HEK293 (cell line): ENCODE measurements at regions of chr6 and their contacts with region 1.

Region 1: GRCh38 chr6:11496152-11497060 is 41.1 kb upstream of the TMEM170B start:
- H3K4me3 ChIP-seq: no peak overlapping the region
- H3K27ac ChIP-seq: no peak overlapping the region
- H3K4me1 ChIP-seq: no peaks in the 10 kb centered on the region
- CTCF ChIP-seq: peak; percentile 83

Region 2: GRCh38 chr6:11093589-11094410 is 402.6 kb before region 1 on chr6 and contains the start of gene SMIM13:
- CTCF ChIA-PET with region 1: interaction called, 15 read pairs
- POLR2A ChIA-PET with region 1: no interaction called
- H3K4me3 ChIP-seq: peak within 1 kb of the TSS; percentile 98
- H3K27ac ChIP-seq: peak within 1 kb of the TSS; percentile 92
- H3K4me1 ChIP-seq: peaks cover 4% of the 10 kb centered on the region; the same call in 1 of the 2 replicates
- CTCF ChIP-seq: peak; percentile 97

Region 3: DNA sequence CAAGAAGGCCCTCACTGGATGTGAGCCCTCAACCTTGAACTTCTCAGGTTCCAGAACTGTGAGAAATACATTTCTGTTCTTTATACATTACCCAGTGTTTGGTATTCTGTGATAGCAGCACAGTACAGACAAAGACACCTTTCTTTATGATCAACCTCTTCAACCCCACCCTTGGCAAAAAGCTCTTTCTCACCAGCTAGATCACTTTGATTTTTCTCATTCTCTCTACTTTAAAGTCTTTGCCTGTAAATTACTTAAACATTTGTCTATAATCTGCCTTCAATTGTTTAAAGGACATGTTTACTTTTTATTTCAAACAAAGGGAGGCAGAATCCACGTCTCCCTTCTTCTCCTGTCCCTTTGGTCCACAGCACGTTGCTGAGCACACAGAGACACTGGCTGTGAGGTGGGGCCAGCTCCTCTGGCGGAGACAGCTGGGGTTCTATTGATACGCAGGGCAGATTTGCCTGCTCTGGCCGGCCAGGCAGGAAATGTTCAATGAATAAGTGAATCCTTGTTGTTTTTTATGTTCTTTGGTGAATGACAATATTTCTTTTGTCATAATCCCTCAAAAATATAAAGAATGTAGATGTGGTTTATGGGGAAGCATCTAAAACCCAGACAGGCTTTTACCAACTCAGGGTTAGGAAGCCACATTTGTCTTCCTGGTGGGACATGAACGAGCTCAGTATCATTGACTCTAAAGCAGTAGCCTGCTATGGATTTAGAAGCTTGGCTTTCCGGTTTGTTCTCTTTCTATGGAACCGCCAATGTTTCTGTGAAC is 316.8 kb before region 1 on chr6:
- CTCF ChIA-PET with region 1: interaction called, 34 read pairs
- POLR2A ChIA-PET with region 1: interaction called, 6 read pairs
- H3K4me3 ChIP-seq: no peak overlapping the region
- H3K27ac ChIP-seq: no peak overlapping the region
- H3K4me1 ChIP-seq: no peaks in the 10 kb centered on the region
- CTCF ChIP-seq: no peak

Region 4: DNA sequence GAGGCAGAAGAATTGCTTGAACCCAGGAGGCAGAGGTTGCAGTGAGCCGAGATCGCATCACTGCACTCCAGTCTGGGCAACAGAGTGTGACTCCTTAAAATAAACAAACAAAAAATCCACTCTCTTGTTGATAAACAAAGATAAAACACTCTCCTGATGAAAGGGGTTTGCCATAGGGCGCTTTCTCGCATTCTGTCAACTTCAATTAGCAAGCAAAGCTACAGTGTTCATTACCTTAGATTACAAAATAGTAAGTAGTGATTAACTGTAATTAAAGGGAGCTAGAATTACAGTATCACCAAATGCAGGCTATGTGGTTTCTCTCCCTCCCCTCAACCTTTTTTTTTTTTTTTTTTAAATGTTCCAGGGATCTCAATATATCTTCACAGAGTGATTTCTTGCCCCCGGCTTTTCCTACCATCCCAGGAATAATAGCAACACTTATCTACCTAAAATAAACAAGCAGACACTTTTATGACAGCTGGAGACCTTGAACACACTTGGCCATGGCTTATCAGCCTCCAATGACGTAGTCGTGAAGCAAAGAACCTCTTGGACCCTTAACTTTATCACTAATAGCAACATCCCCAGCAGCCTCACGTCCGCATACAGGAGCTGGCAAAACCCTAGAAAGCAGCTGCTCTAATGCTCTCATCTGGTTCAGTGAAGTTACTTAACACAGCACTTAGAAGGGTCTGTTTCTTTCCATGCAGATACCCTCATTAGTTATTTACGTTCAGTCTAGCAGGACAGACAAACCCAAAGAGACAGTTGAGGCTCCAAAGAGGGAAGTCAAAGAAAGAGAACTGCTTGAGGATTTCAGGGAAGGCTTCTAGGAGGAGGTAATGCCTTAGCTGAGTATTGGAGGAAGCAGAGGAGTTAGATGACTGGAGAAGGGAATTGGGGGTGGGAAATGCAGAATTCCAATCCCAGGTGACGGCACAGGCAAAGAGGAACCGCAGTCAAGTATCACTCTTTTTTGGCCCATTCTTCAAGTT is 226.1 kb before region 1 on chr6:
- CTCF ChIA-PET with region 1: interaction called, 10 read pairs
- POLR2A ChIA-PET with region 1: interaction called, 8 read pairs
- H3K4me3 ChIP-seq: no peak overlapping the region
- H3K27ac ChIP-seq: peak overlapping the region; percentile 70
- H3K4me1 ChIP-seq: peaks cover 28% of the 10 kb centered on the region
- CTCF ChIP-seq: no peak

Region 5: GRCh38 chr6:11434565-11435326 is 61.7 kb before region 1 on chr6:
- CTCF ChIA-PET with region 1: interaction called, 23 read pairs
- POLR2A ChIA-PET with region 1: no interaction called
- H3K4me3 ChIP-seq: no peak overlapping the region
- H3K27ac ChIP-seq: peak overlapping the region; percentile 32
- H3K4me1 ChIP-seq: peaks cover 34% of the 10 kb centered on the region
- CTCF ChIP-seq: no peak

Region 6: DNA sequence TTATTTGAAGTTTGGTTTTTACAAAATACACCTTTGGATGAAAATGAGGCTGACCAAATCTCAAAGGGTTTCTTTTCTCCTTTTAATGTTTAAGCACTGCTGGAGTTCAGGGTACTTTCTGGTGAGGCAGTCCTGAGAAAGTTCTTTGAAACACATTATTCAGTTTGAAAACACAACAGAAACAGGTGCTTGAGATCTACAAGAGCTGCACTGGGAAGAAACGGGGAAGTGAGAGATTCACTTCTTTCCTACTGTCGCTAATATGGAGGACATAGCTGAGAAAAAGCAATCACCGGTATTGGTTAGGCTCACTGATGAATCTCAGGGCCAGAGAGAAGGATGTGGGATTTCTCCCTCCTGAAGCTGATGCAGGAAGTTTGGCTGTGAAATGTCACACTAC is 18.3 kb after region 1 on chr6:
- CTCF ChIA-PET with region 1: interaction called, 27 read pairs
- POLR2A ChIA-PET with region 1: no interaction called
- H3K4me3 ChIP-seq: no peak overlapping the region
- H3K27ac ChIP-seq: no peak overlapping the region
- H3K4me1 ChIP-seq: no peaks in the 10 kb centered on the region
- CTCF ChIP-seq: no peak

Region 7: GRCh38 chr6:11785774-11786579 is 289.6 kb after region 1 on chr6:
- CTCF ChIA-PET with region 1: no interaction called
- POLR2A ChIA-PET with region 1: no interaction called
- H3K4me3 ChIP-seq: no peak overlapping the region
- H3K27ac ChIP-seq: no peak overlapping the region
- H3K4me1 ChIP-seq: peaks cover 3% of the 10 kb centered on the region; the same call in 1 of the 2 replicates
- CTCF ChIP-seq: no peak

Region 8: DNA sequence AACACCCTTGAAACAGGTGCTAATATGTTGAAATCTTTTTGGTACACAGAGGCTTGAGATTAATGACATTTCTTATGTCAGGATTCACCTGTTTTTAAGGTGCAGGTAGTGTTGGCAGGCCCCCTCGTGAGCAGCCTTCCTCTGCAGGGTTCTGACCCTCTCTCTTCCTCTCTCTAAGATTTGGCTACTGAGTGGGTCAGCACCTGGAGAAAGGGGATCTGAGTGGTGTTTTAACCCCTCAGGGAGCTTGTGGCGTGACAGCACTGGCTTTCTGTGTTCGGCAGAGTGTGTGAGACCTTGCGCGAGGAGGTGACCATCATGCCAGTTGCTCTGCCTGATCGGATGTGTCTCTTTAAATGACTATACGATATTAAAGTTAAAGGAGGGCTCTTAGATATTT is 552.8 kb after region 1 on chr6:
- CTCF ChIA-PET with region 1: no interaction called
- POLR2A ChIA-PET with region 1: no interaction called
- H3K4me3 ChIP-seq: no peak overlapping the region
- H3K27ac ChIP-seq: no peak overlapping the region
- H3K4me1 ChIP-seq: no peaks in the 10 kb centered on the region
- CTCF ChIP-seq: no peak